Natural killer cell (primary cell): ENCODE measurements at regions of chr21 and their contacts with region 1.

Region 1: DNA sequence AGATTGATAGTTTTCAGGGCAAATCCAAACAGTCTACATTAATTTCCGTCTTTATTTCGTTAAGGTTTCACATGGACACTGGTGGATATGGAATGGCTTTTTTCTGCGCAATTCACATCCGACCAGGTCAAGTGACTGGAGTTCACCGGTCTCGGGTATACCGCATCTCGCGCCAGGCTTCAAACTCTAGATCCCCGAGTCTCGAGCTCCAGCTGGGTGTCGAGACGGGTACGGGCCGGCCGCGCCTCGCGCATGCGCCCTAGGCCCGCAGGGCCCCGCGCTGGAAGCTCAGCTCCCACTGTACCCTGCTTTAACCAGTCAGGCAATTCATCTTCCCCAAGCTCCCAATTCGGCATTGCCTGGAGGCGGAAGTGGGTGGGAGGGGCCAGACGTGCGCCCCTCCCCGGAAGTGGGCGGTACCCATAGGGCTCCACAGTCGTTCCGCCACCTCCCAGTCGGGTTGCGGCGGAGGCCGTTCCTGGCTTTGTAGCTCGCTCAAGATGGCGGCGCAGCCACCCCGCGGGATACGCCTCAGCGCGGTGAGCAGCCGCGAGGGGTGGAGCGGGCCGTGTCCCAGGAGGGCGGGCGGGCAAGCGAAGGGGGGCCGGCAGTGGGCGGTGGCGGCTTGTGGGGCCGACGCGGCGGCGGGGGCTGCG is at the start of gene MORC3:
- DNase-seq: peak; percentile 96 to 99
- ATAC-seq: peak; percentile 88 to 97 (median 89)
- H3K4me3 ChIP-seq: peak within 1 kb of the TSS; percentile 94
- H3K4me3 Mint-ChIP-seq: peak within 1 kb of the TSS; percentile 96
- H3K27ac ChIP-seq: peak within 1 kb of the TSS; percentile 89
- H3K27ac Mint-ChIP-seq: peak within 1 kb of the TSS; percentile 87 to 98
- H3K4me1 ChIP-seq: peaks cover 21% of the 10 kb centered on the region
- H3K4me1 Mint-ChIP-seq: peaks cover 35 to 43% of the 10 kb centered on the region in 2 donors
- H3K27me3 ChIP-seq: no peaks in the 10 kb centered on the region
- H3K27me3 Mint-ChIP-seq: no peaks in the 10 kb centered on the region
- CTCF ChIP-seq: no peak
- total RNA-seq, gene MORC3: 59.7 to 74.1 (median 64.8) TPM

Region 2: DNA sequence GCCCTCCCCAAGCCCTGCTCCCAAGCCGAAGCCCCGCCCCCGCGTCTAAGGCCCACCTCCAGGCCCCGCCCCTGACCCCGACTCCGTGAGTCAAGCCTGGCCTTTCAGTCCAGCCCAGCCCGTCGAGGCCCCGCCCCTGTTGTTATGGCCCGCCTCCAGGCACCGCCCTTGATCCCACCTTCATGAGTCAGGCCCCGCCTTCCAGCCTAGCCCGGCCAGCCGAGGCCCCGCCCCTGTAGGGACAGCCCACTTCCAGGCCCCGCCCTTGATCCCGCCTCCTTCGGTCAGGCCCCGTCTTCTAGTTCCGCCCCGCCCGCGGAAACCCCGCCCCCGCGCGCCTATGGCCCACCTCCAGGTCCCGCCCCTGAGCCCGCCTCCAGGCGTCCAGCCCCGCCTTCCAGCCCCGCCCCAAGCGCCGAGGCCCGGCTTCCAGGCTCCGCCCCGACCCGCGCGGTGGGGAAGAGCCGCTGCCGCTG is 163.5 kb before region 1 on chr21:
- intact Hi-C with region 1: loop called (anchors 1 kb)
- DNase-seq: peak; percentile 99 to 100
- ATAC-seq: peak; percentile 89 to 97 (median 90)
- H3K4me3 ChIP-seq: peak overlapping the region; percentile 58
- H3K4me3 Mint-ChIP-seq: peak overlapping the region; percentile 81
- H3K27ac ChIP-seq: no peak overlapping the region
- H3K27ac Mint-ChIP-seq: peak overlapping the region in 1 of 2 donors; percentile 84
- H3K4me1 ChIP-seq: peaks cover 15% of the 10 kb centered on the region
- H3K4me1 Mint-ChIP-seq: peaks cover 24 to 29% of the 10 kb centered on the region in 2 donors
- H3K27me3 ChIP-seq: no peaks in the 10 kb centered on the region
- H3K27me3 Mint-ChIP-seq: no peaks in the 10 kb centered on the region
- CTCF ChIP-seq: no peak

Region 3: GRCh38 chr21:36260030-36260787 is 59.7 kb before region 1 on chr21:
- intact Hi-C with region 1: loop called (anchors 2 kb)
- DNase-seq: peak in 1 of 2 donors; percentile 83
- ATAC-seq: peak; percentile 81 to 97 (median 93)
- H3K4me3 ChIP-seq: peak overlapping the region; percentile 43
- H3K4me3 Mint-ChIP-seq: peak overlapping the region; percentile 80
- H3K27ac ChIP-seq: peak overlapping the region; percentile 83
- H3K27ac Mint-ChIP-seq: peak overlapping the region; percentile 90 to 94
- H3K4me1 ChIP-seq: peaks cover 11% of the 10 kb centered on the region
- H3K4me1 Mint-ChIP-seq: peaks cover 12 to 13% of the 10 kb centered on the region in 2 donors
- H3K27me3 ChIP-seq: no peaks in the 10 kb centered on the region
- H3K27me3 Mint-ChIP-seq: no peaks in the 10 kb centered on the region
- CTCF ChIP-seq: peak; percentile 85

Region 4: DNA sequence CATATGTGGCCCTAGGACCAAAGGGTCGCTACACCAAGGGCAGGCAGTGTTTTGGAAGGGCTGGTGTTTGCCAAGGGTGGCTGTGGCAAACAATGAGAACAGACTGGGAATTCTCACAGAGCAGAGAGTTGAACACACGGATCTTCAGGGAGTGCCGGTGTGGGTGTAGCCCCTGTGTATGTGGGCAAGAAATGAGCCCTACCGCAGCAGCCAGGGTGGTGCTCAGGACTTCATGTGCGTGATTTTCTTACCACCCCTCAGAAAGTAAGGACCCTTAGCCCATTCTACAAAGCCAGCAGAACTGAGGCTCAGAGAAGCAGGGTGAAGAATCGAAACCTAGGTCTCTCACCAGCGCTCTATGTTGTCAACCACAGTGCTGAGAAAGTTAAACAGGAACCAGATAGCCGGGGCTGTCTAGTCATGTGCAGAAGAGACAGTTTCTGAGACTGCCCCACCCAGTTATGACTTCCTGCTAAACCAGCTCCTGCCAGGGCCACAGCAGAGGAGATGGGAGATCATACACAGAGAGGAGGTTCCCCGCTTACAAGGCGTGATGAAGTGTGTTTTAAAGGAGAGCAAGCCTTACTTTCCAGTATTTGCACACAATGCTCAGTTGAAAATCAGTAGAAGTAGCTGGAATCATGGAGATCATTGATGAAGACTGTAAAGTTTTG is 21.8 kb before region 1 on chr21:
- intact Hi-C with region 1: loop called (anchors 1 kb)
- DNase-seq: peak; percentile 64 to 91
- ATAC-seq: peak; percentile 96 to 99 (median 99)
- H3K4me3 ChIP-seq: peak overlapping the region; percentile 23
- H3K4me3 Mint-ChIP-seq: peak overlapping the region; percentile 77
- H3K27ac ChIP-seq: peak overlapping the region; percentile 89
- H3K27ac Mint-ChIP-seq: peak overlapping the region; percentile 96 to 99
- H3K4me1 ChIP-seq: peaks cover 38% of the 10 kb centered on the region
- H3K4me1 Mint-ChIP-seq: peaks cover 26 to 31% of the 10 kb centered on the region in 2 donors
- H3K27me3 ChIP-seq: no peaks in the 10 kb centered on the region
- H3K27me3 Mint-ChIP-seq: no peaks in the 10 kb centered on the region
- CTCF ChIP-seq: no peak

Region 5: DNA sequence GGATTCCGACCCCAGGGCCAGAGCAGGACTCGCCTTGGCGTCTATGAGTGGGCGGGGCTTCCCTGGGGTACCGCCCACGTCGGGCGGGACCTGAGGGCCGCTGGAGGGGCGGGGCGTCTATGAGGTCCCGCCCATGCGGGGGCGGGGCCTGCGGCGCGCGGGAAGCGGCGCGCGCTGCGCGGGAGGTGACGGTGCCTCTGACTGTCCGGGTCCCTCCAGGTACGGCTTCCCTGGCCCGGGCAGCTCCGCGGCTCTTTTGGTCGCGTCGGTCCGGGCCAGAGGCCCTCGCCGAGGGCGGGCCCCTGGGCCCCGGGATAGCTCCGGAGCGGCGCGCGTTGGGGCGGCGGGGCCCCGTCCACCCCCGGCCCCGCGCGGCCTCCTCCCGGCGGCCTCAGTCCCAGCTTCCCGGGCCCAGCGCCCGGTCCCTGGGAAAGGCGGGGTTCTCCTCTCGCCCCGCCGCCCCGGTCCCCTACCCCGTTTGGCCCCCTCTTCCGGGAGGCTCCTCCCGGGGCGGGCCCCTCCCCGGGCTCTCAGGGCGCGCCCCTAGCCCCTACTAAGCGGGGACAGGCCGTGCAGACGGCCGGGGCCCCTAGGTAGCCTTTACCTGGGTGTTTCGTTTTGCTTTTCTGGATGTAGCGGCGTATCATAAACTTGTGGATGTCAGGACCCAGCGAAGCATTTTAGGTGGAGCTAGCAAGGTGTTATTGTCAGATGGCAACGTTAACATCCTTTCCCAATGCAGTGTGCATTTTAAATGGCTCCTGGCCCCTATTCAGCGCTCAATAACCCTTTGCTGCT is 65.5 kb after region 1 on chr21 and contains the start of gene CHAF1B:
- intact Hi-C with region 1: loop called (anchors 5 kb)
- DNase-seq: peak; percentile 88 to 90
- ATAC-seq: peak; percentile 99 to 100 (median 99)
- H3K4me3 ChIP-seq: peak within 1 kb of the TSS; percentile 28
- H3K4me3 Mint-ChIP-seq: peak within 1 kb of the TSS; percentile 84
- H3K27ac ChIP-seq: no peak within 1 kb of the TSS
- H3K27ac Mint-ChIP-seq: peak within 1 kb of the TSS in 1 of 2 donors; percentile 53
- H3K4me1 ChIP-seq: peaks cover 12% of the 10 kb centered on the region
- H3K4me1 Mint-ChIP-seq: peaks cover 5% of the 10 kb centered on the region in 2 donors
- H3K27me3 ChIP-seq: no peaks in the 10 kb centered on the region
- H3K27me3 Mint-ChIP-seq: no peaks in the 10 kb centered on the region
- CTCF ChIP-seq: no peak
- total RNA-seq, gene CHAF1B: 7.6 to 7.9 (median 7.7) TPM

Region 6: DNA sequence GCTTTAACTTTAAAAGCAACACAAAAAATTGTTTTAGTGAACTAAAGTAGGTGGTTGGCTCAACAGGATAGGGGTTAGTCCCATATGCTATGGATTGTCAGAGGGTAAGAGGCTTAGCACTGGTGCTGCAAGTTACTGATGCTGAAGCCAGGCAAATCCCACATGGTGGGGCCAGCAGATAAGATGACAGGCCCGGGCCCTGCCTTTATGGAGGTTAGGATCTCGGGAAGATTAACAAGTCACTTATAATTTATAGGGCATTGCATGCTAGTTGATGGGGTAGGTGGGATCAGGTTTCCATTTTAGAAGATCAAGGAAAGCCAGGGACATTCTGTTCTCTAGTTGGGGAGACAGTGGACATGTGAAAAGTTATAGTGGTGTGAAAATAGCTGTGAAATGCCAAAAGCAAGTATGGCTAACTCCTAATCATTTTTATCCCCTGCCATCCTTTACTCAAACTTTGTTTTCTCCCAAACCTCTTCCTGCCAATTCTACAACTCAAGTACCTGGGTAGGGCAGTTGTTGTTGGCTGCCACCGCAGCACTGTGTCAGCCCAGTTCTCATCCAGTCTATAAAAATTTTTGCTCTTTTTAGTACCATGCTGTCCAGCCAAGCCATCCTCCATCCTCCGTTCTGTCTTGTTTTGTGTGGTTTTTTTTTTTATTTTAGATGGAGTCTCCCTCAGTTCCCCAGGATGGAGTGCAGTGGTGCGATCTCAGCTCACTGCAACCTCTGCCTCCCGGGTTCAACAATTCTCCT is 75.6 kb after region 1 on chr21:
- intact Hi-C with region 1: no loop called
- DNase-seq: no peak
- ATAC-seq: no peak
- H3K4me3 ChIP-seq: no peak overlapping the region
- H3K4me3 Mint-ChIP-seq: no peak overlapping the region
- H3K27ac ChIP-seq: no peak overlapping the region
- H3K27ac Mint-ChIP-seq: no peak overlapping the region
- H3K4me1 ChIP-seq: no peaks in the 10 kb centered on the region
- H3K4me1 Mint-ChIP-seq: peaks cover 0 to 7% of the 10 kb centered on the region in 2 donors
- H3K27me3 ChIP-seq: no peaks in the 10 kb centered on the region
- H3K27me3 Mint-ChIP-seq: no peaks in the 10 kb centered on the region
- CTCF ChIP-seq: no peak

Region 7: GRCh38 chr21:36415375-36415774 is 95.5 kb after region 1 on chr21:
- intact Hi-C with region 1: no loop called
- DNase-seq: no peak
- ATAC-seq: no peak
- H3K4me3 ChIP-seq: no peak overlapping the region
- H3K4me3 Mint-ChIP-seq: no peak overlapping the region
- H3K27ac ChIP-seq: no peak overlapping the region
- H3K27ac Mint-ChIP-seq: no peak overlapping the region
- H3K4me1 ChIP-seq: no peaks in the 10 kb centered on the region
- H3K4me1 Mint-ChIP-seq: peaks cover 5 to 9% of the 10 kb centered on the region in 2 donors
- H3K27me3 ChIP-seq: no peaks in the 10 kb centered on the region
- H3K27me3 Mint-ChIP-seq: no peaks in the 10 kb centered on the region
- CTCF ChIP-seq: no peak

Region 8: GRCh38 chr21:36429947-36430546 is 110.2 kb after region 1 on chr21:
- intact Hi-C with region 1: loop called (anchors 1 kb)
- DNase-seq: peak; percentile 65 to 79
- ATAC-seq: peak; percentile 88 to 92 (median 92)
- H3K4me3 ChIP-seq: peak overlapping the region; percentile 25
- H3K4me3 Mint-ChIP-seq: peak overlapping the region; percentile 87
- H3K27ac ChIP-seq: peak overlapping the region; percentile 81
- H3K27ac Mint-ChIP-seq: peak overlapping the region; percentile 92 to 94
- H3K4me1 ChIP-seq: peaks cover 19% of the 10 kb centered on the region
- H3K4me1 Mint-ChIP-seq: peaks cover 15 to 30% of the 10 kb centered on the region in 2 donors
- H3K27me3 ChIP-seq: no peaks in the 10 kb centered on the region
- H3K27me3 Mint-ChIP-seq: peaks cover 0 to 5% of the 10 kb centered on the region in 2 donors
- CTCF ChIP-seq: peak; percentile 17

Region 9: DNA sequence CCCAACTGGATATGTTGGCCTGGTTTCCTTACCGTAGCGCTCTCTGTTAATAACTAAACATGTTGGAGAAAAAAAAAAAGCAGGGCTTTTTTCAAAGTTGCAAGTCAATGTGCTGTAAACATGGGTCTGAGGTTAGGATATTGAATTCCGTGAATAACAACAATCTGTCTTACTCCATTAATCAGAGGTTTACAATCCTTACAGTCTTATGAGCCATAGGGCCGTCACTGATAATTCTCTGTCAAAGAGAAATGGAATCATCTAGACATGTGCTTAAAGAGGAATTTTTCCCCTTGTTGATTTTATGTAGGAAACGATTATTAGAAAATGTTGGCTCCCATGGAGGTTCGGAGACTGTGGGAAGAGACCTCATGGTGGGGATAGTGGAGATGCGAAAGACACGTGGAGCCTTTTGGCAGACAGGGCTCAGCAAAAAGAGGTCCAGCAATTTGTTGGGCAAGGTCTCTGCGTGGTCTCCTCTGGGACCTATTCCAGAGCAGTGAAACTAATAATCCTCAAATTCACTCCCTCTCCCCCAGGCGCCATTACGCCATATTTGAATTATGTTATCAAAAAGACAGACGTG is 243.5 kb after region 1 on chr21:
- intact Hi-C with region 1: no loop called
- DNase-seq: no peak
- ATAC-seq: no peak
- H3K4me3 ChIP-seq: no peak overlapping the region
- H3K4me3 Mint-ChIP-seq: no peak overlapping the region
- H3K27ac ChIP-seq: no peak overlapping the region
- H3K27ac Mint-ChIP-seq: no peak overlapping the region
- H3K4me1 ChIP-seq: no peaks in the 10 kb centered on the region
- H3K4me1 Mint-ChIP-seq: no peaks in the 10 kb centered on the region
- H3K27me3 ChIP-seq: no peaks in the 10 kb centered on the region
- H3K27me3 Mint-ChIP-seq: peaks cover 20 to 38% of the 10 kb centered on the region in 2 donors
- CTCF ChIP-seq: no peak